ENCODE measurements at regions of chr9 and their contacts with region 1.

Region 1: DNA sequence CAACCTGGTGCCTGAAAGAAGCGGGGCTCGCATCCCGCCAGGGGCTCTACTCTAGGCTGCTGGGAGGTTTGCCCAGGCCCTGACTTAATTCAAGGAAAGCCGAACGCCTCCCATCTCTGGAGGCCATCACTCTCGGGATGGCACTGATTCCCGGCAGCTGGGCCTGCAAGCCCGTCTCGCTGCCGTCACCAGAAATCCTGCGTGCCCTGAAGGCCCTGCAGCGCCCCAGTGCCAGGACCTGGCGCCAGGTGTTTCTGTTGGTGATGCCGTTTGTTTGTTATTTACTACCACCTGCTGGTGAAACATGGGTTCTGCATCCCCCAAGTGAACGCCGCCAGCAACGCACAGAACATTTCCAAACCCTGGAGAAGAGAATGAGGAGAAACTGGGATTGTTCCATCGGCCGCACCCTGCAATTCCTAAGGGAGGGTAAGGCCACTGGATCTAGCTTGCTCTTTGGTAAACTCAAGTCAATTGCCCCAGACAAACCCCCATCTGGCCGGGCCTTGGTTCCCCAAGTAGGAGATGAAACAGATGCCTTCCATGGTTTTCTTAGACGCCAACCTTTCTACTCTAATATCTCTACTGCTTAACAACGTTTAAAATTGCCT is 77.9 kb downstream of the AK8 start:
- DNase-seq: peak; percentile 72
- H3K4me3 ChIP-seq: no peak overlapping the region
- H3K27ac ChIP-seq: no peak overlapping the region
- H3K4me1 ChIP-seq: peaks cover 3% of the 10 kb centered on the region
- H3K27me3 ChIP-seq: peaks cover 4% of the 10 kb centered on the region
- CTCF ChIP-seq: peak; percentile 89

Region 2: DNA sequence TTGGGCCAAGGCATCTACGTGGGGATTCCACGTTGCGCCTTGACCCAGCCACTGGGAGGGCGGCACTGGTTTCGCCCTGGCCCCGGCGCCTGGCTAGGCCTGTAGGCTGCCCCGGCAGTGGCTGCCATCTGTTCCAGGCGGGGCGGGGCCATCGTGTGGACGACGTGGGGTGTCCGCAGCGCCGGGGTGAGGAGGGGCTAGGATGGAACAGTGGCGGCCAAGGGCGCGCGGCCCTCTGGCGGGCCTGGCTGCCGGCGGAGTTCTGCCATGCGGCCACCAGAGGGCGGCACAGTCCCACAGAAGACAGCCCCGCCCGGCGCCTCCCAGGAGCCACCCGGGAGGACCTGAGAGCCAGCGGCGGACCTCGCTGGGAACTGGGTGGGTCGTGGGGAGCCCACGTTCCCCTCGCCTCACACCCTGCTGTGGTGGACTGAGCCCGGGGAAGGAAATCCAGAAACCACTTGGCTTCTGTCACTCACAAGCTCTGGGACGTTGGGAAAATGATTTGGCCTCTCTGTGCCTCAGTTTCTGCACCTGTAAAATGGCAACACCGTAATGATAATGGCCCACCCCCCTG is 1037.7 kb before region 1 on chr9:
- intact Hi-C with region 1: no loop called
- DNase-seq: peak; percentile 62
- H3K4me3 ChIP-seq: no peak overlapping the region
- H3K27ac ChIP-seq: no peak overlapping the region
- H3K4me1 ChIP-seq: no peaks in the 10 kb centered on the region
- H3K27me3 ChIP-seq: no peaks in the 10 kb centered on the region
- CTCF ChIP-seq: peak; percentile 93

Region 3: DNA sequence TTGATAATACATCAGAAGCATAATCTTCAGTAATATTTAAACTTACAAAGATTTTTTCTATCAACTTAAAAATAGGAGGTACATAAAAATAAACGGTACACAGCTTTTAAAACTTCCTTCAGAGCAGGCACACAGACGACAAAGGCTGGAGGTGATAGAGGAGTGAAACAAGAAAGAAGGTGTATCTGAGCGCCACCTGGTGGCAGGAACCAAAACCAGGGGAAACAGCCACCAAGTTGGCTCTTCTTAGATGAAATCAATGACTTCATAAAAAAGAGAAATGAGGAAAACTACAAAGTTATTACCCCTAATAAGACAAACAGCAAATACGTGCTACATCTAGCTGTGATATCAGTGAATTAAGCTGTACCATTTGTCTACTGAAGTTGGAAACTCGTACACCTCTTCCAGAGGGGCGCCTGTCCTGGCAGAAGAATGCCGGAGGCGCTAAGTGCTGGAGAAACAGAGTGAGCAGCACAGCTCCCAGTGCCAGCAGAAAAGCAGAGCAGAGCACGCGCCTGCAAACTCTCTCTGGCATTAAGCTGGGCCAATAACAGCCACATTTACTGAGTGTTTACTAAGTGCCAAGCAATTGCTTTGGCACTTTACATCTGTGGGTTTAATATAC is 531.3 kb before region 1 on chr9:
- intact Hi-C with region 1: no loop called
- DNase-seq: peak; percentile 51
- H3K4me3 ChIP-seq: no peak overlapping the region
- H3K27ac ChIP-seq: no peak overlapping the region
- H3K4me1 ChIP-seq: no peaks in the 10 kb centered on the region
- H3K27me3 ChIP-seq: no peaks in the 10 kb centered on the region
- CTCF ChIP-seq: peak; percentile 85

Region 4: GRCh38 chr9:132973713-132974112 is 173.6 kb after region 1 on chr9:
- intact Hi-C with region 1: loop called (anchors 10 kb)
- DNase-seq: no peak
- H3K4me3 ChIP-seq: no peak overlapping the region
- H3K27ac ChIP-seq: no peak overlapping the region
- H3K4me1 ChIP-seq: peaks cover 5% of the 10 kb centered on the region
- H3K27me3 ChIP-seq: peaks cover 6% of the 10 kb centered on the region
- CTCF ChIP-seq: no peak

Measured in colonic mucosa (tissue), 4 donors.